ENCODE measurements at regions of chr9 and their contacts with region 1.

Region 1: GRCh38 chr9:70563431-70564204 is 149.2 kb upstream of the KLF9 start:
- DNase-seq: no peak
- H3K4me3 ChIP-seq: no peak overlapping the region
- H3K27ac ChIP-seq: peak overlapping the region; percentile 9 to 73
- H3K4me1 ChIP-seq: no peaks in the 10 kb centered on the region
- H3K27me3 ChIP-seq: no peaks in the 10 kb centered on the region
- CTCF ChIP-seq: no peak
- POLR2A ChIP-seq: no peak

Region 2: GRCh38 chr9:69932901-69933300 is 630.7 kb before region 1 on chr9:
- intact Hi-C with region 1: no loop called
- DNase-seq: no peak
- H3K4me3 ChIP-seq: no peak overlapping the region
- H3K27ac ChIP-seq: no peak overlapping the region
- H3K4me1 ChIP-seq: no peaks in the 10 kb centered on the region
- H3K27me3 ChIP-seq: no peaks in the 10 kb centered on the region
- CTCF ChIP-seq: no peak
- POLR2A ChIP-seq: no peak

Region 3: GRCh38 chr9:70510157-70510770 is 53.4 kb before region 1 on chr9:
- intact Hi-C with region 1: loop called (anchors 10 kb)
- DNase-seq: no peak
- H3K4me3 ChIP-seq: no peak overlapping the region
- H3K27ac ChIP-seq: no peak overlapping the region
- H3K4me1 ChIP-seq: no peaks in the 10 kb centered on the region
- H3K27me3 ChIP-seq: no peaks in the 10 kb centered on the region
- CTCF ChIP-seq: peak in 3 of 4 experiments; percentile 29 to 36 (median 32)
- POLR2A ChIP-seq: no peak